Tibial artery (tissue), 4 donors: ENCODE measurements at regions of chr15 and their contacts with region 1.

Region 1: DNA sequence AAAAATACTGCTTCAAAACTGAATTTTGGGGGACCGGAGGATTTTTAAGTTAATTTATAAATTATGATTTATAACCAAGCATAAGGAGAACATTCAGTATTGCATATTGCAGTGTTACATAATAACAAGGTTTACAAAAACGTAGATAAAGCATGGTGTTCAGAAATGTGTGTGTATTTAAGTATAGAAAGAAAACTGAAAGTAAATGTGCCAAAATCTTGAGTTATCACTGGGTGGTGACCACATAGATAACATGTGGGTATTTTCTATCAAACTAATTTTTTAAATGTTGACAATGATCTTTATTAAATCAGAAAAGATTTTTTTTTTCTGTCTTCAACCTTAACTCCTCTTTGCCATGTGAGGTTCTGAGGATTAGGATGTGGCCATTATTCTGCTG is 32.6 kb downstream of the EIF2AK4 start:
- DNase-seq: no peak
- H3K4me3 ChIP-seq: no peak overlapping the region
- H3K27ac ChIP-seq: no peak overlapping the region
- H3K4me1 ChIP-seq: peaks cover 0 to 4% (median 0%) of the 10 kb centered on the region in 4 donors
- H3K27me3 ChIP-seq: no peaks in the 10 kb centered on the region
- CTCF ChIP-seq: no peak

Region 2: GRCh38 chr15:39736412-39737197 is 229.9 kb before region 1 on chr15:
- intact Hi-C with region 1: no loop called
- DNase-seq: no peak
- H3K4me3 ChIP-seq: no peak overlapping the region
- H3K27ac ChIP-seq: no peak overlapping the region
- H3K4me1 ChIP-seq: no peaks in the 10 kb centered on the region
- H3K27me3 ChIP-seq: no peaks in the 10 kb centered on the region
- CTCF ChIP-seq: no peak

Region 3: GRCh38 chr15:39990706-39991105 is 24.2 kb after region 1 on chr15:
- intact Hi-C with region 1: loop called (anchors 2 kb)
- DNase-seq: no peak
- H3K4me3 ChIP-seq: no peak overlapping the region
- H3K27ac ChIP-seq: no peak overlapping the region
- H3K4me1 ChIP-seq: no peaks in the 10 kb centered on the region
- H3K27me3 ChIP-seq: no peaks in the 10 kb centered on the region
- CTCF ChIP-seq: no peak

Region 4: DNA sequence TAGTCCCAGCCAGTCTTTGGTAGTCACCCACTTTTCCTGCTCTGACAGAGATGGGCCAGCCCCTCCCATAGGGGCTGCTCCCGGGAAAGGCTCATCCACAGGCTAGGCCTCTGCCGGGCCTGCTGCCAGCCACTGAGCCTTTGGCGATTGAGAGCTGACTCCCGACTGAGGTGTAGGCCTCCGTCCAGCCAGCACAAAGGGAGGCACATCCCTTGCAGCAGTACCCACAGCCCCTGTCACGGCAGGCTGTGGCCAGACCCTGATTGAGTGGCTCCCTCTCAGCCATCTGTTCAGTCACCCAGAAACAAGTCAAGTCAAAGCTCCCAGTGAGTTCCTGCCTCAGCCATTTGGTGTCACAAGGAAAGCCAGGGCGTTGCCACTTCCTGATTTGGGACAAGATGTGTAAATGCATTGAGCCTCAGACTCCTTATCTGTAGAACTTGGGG is 266.1 kb after region 1 on chr15:
- intact Hi-C with region 1: no loop called
- DNase-seq: peak in 1 of 2 donors; percentile 60
- H3K4me3 ChIP-seq: no peak overlapping the region
- H3K27ac ChIP-seq: no peak overlapping the region
- H3K4me1 ChIP-seq: no peaks in the 10 kb centered on the region
- H3K27me3 ChIP-seq: no peaks in the 10 kb centered on the region
- CTCF ChIP-seq: no peak

Region 5: DNA sequence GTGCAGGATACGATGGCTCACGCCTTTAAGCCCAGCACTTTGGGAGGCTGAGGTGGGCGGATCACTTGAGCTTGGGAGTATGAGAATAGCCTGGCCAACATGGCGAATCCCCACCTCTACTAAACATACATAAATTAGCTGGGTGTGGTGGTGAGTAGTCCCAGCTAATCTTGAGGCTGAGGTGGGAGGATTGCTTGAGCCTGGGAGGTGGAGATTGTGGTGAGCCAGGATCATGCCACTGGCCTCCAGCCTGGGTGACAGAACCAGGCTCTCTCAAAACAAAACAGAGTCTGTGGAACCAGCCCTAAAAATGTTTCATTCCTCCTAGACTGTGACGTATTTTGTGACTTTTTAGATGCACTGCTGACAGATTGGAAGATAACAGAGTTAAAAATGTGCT is 694.2 kb after region 1 on chr15:
- intact Hi-C with region 1: no loop called
- DNase-seq: no peak
- H3K4me3 ChIP-seq: no peak overlapping the region
- H3K27ac ChIP-seq: no peak overlapping the region
- H3K4me1 ChIP-seq: no peaks in the 10 kb centered on the region
- H3K27me3 ChIP-seq: no peaks in the 10 kb centered on the region
- CTCF ChIP-seq: no peak